B cell (primary cell): ENCODE measurements at regions of chr19 and their contacts with region 1.

Region 1: DNA sequence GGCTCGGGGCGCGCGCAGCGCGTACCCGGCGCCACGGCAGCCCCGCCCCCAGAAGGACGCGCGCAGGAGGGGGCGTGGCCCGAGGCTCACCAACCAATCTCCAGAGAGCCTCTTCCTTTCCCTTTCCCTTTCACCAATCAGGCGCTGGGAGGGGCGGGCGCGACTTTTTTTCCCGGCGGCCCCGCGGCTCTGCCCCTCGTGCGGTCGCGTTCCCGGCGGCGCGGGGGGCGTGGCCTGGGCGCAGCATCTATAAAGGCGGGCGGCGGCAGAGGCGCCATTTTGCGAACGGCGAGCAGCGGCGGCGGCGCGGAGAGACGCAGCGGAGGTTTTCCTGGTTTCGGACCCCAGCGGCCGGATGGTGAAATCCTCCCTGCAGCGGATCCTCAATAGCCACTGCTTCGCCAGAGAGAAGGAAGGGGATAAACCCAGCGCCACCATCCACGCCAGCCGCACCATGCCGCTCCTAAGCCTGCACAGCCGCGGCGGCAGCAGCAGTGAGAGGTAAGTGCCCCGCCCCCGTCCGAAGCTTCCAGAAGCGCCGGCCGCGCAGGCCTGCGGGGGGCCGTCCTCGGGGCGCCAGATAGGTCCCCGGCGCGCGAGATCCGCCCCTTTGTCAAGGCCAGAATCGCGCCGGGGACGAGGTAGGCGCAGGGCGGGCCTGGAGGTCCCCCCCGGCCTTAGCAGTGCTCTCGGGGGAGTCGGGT is 12.6 kb downstream of the PEAK3 start:
- DNase-seq: peak; percentile 99
- ATAC-seq: peak; percentile 66
- H3K4me3 ChIP-seq: peak overlapping the region; percentile 59 to 100 (median 99)
- H3K4me3 Mint-ChIP-seq: peak overlapping the region; percentile 89
- H3K27ac ChIP-seq: peak overlapping the region; percentile 79 to 94
- H3K27ac Mint-ChIP-seq: peak overlapping the region; percentile 97
- H3K4me1 ChIP-seq: peaks cover 56 to 66% of the 10 kb centered on the region in 2 donors
- H3K4me1 Mint-ChIP-seq: peaks cover 52% of the 10 kb centered on the region
- H3K27me3 ChIP-seq: no peaks in the 10 kb centered on the region
- H3K27me3 Mint-ChIP-seq: no peaks in the 10 kb centered on the region
- CTCF ChIP-seq: no peak

Region 2: DNA sequence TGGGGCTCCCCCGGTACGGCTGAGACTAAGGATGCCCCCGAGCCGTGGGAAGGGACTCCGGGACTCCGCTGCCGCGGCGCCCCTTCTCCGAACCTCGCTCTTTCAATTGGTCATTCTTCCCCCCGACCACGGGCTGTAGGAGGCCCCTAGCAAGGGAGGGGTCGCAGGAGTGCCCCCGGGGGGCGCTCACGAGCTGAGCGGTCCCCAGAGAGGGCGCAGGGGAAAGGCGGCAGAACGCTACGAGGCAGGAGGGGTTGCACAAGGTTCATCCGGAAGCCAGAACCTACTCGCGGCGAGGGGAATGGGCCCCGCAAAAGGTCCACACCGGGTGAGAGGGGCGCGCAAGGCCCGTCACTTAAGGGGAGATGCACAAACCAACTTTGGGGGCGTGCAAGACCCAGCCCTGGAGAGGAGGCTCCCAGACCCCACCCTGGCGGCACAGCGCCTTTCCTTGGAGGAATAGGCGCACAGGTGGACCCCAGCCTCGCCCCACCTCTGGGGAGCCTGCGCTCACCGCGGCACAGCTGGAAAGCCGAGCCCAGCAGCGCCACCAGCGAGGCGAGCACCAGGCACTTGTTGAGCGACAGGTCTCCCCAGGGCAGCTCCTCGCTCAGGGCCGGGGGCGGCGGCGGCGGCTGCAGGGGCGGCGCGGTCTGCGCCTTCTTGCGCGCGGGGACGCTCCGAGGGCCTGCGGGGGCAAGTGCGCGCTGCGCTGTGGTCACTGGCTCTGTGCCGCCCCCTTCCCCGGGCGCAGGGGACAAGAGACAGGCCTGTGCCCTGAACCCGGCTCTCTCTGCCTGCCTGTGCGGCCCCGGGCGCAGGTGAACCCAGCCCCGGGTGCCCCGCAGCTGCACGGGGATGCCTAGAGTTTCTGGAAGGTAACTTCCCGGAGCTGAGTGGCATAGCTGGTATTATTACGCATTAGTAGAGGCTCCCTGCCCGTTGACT is 16.0 kb before region 1 on chr19:
- CTCF ChIA-PET with region 1: interaction called, 66 read pairs
- POLR2A ChIA-PET with region 1: interaction called, 134 read pairs
- intact Hi-C with region 1: loop called (anchors 1 kb)
- DNase-seq: peak; percentile 77
- ATAC-seq: peak; percentile 40
- H3K4me3 ChIP-seq: peak overlapping the region; percentile 30 to 70 (median 55)
- H3K4me3 Mint-ChIP-seq: peak overlapping the region; percentile 88
- H3K27ac ChIP-seq: no peak overlapping the region
- H3K27ac Mint-ChIP-seq: peak overlapping the region; percentile 65
- H3K4me1 ChIP-seq: peaks cover 54 to 68% of the 10 kb centered on the region in 2 donors
- H3K4me1 Mint-ChIP-seq: peaks cover 43% of the 10 kb centered on the region
- H3K27me3 ChIP-seq: peaks cover 0 to 38% (median 14%) of the 10 kb centered on the region in 4 experiments
- H3K27me3 Mint-ChIP-seq: no peaks in the 10 kb centered on the region
- CTCF ChIP-seq: peak; percentile 63

Region 3: DNA sequence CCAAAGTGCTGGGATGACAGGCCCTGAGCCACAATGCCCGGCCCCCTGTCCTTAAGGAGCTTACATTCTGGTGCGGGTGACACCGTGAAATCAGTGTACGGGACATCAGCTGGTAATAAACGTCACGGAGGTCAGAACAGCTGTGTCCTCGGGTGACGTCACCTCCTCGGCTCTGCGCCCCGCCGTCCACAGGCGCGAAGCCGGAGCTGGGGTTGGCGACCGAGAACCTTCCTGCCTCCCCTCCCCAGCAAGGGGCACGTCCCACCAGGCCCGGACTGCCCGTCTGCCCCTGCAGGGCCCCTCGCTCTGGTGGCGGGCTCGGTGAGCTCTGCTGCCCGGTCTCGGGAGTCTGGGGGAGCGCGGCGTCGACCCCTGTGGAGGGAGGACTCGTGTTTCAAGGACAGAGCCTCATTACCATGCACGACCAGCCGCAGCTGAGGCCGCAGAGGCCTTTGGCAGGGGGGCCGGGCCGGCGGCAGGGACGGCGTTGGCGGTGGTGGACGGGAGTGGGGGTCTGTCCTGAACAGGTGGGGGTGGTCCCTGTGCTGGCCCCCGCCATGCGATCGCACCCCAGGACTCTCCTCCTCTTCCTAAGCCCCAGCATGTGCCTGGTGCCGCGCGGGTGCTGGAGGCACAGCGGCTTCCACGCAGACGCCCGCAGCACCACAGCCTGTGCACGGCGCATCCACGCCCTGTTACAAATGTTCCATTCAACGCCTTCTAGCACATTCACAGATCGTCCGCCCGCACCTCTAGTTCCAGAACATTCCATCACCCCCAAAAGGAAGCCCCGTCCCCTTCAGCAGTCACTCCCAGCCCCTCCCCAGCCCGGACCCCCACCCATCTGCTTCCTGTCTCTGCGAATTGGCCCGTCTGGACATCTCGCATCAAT is 33.2 kb after region 1 on chr19:
- CTCF ChIA-PET with region 1: interaction called, 6 read pairs
- POLR2A ChIA-PET with region 1: interaction called, 15 read pairs
- intact Hi-C with region 1: no loop called
- DNase-seq: peak; percentile 78
- ATAC-seq: peak; percentile 48
- H3K4me3 ChIP-seq: peak overlapping the region in 4 of 5 experiments; percentile 25 to 65 (median 43)
- H3K4me3 Mint-ChIP-seq: peak overlapping the region; percentile 87
- H3K27ac ChIP-seq: peak overlapping the region; percentile 64 to 78
- H3K27ac Mint-ChIP-seq: peak overlapping the region; percentile 86
- H3K4me1 ChIP-seq: peaks cover 45 to 66% of the 10 kb centered on the region in 2 donors
- H3K4me1 Mint-ChIP-seq: peaks cover 43% of the 10 kb centered on the region
- H3K27me3 ChIP-seq: peaks cover 0 to 18% (median 5%) of the 10 kb centered on the region in 4 experiments
- H3K27me3 Mint-ChIP-seq: peaks cover 4% of the 10 kb centered on the region
- CTCF ChIP-seq: no peak

Region 4: DNA sequence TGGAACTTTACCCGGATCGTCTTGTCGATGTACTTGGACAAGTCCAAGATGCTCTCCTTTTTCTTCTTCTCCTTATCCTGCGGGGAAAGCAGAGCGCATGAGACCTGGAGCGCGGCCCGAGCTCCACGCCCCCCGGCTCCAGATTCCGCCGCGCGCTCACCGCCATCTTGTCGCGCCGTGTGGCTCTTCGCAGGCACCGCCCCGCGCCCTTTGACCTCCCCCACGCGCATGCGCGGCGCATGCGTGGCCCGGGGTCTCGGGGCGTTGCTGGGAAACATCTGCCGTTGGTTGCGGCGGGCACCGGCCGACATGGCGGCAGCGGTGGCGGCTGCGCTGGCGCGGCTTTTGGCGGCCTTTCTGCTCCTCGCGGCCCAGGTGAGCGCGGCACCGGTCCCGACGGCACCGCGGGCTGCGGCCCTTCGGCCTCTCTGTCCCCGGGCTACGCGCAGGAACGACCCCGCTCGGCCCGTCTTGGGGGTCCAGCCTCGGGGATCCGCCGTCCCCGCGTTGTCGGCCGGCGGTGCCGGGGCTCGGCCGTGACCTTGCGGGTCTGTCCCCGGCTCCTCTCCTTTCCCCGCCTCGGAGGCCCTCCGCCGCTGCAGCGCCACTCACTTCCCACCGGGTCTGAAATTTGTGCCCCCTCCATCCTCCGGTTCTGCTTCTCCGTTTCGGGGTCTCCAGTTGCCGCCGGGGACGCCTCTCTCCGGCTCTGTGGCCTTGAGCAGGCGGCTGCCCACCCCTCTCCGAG is 59.2 kb after region 1 on chr19 and contains the starts of genes LSM7 and SPPL2B:
- CTCF ChIA-PET with region 1: interaction called, 3 read pairs
- POLR2A ChIA-PET with region 1: interaction called, 5 read pairs
- intact Hi-C with region 1: loop called (anchors 2 kb)
- DNase-seq: peak; percentile 95
- ATAC-seq: peak; percentile 42
- H3K4me3 ChIP-seq: peak within 1 kb of the TSS; percentile 66 to 97 (median 92)
- H3K4me3 Mint-ChIP-seq: peak within 1 kb of the TSS; percentile 96
- H3K27ac ChIP-seq: peak within 1 kb of the TSS; percentile 71 to 90
- H3K27ac Mint-ChIP-seq: peak within 1 kb of the TSS; percentile 98
- H3K4me1 ChIP-seq: peaks cover 81 to 92% of the 10 kb centered on the region in 2 donors
- H3K4me1 Mint-ChIP-seq: peaks cover 81% of the 10 kb centered on the region
- H3K27me3 ChIP-seq: no peaks in the 10 kb centered on the region
- H3K27me3 Mint-ChIP-seq: no peaks in the 10 kb centered on the region
- CTCF ChIP-seq: no peak
- total RNA-seq, gene LSM7: 180 and 201 TPM in 2 replicates
- total RNA-seq, gene SPPL2B: 479 and 511 TPM in 2 replicates

Region 5: GRCh38 chr19:2355168-2356035 is 86.0 kb after region 1 on chr19:
- CTCF ChIA-PET with region 1: no interaction called
- POLR2A ChIA-PET with region 1: no interaction called
- intact Hi-C with region 1: no loop called
- DNase-seq: no peak
- ATAC-seq: no peak
- H3K4me3 ChIP-seq: no peak overlapping the region
- H3K4me3 Mint-ChIP-seq: no peak overlapping the region
- H3K27ac ChIP-seq: no peak overlapping the region
- H3K27ac Mint-ChIP-seq: no peak overlapping the region
- H3K4me1 ChIP-seq: peaks cover 3 to 4% of the 10 kb centered on the region in 2 donors
- H3K4me1 Mint-ChIP-seq: peaks cover 1% of the 10 kb centered on the region
- H3K27me3 ChIP-seq: peaks cover 0 to 3% (median 1%) of the 10 kb centered on the region in 4 experiments
- H3K27me3 Mint-ChIP-seq: peaks cover 1% of the 10 kb centered on the region
- CTCF ChIP-seq: no peak

Region 6: DNA sequence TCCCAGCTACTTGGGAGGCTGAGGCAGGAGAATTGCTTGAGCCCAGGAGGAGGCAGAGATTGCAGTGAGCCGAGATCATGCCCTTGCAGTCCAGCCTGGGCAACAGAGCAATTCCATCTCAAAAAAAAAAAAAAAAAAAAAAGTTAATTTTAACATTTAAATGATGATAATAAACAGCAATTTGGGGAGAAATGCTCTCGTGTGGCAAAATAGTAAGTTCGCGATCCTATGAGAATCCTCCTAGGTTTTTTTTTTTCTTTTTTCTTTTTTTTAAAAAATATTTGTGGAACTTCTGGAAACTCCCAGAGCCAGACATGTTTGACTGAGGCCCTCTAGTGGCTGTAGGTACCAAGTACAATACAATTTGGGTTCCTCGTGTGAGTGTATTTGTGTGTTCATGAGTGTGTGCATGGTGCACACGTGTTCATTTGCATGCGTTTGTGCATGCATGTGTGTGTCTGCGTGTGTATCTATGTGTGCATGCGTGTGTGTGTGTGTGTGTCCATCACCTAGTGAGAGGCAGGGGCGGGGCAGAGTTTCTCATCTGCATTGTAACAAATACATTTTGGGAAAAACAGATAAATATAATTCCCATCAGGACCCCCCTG is 121.8 kb after region 1 on chr19:
- CTCF ChIA-PET with region 1: interaction called, 58 read pairs
- POLR2A ChIA-PET with region 1: interaction called, 3 read pairs
- intact Hi-C with region 1: no loop called
- DNase-seq: peak; percentile 82
- ATAC-seq: peak; percentile 51
- H3K4me3 ChIP-seq: no peak overlapping the region
- H3K4me3 Mint-ChIP-seq: peak overlapping the region; percentile 61
- H3K27ac ChIP-seq: no peak overlapping the region
- H3K27ac Mint-ChIP-seq: peak overlapping the region; percentile 70
- H3K4me1 ChIP-seq: peaks cover 16 to 31% of the 10 kb centered on the region in 2 donors
- H3K4me1 Mint-ChIP-seq: peaks cover 32% of the 10 kb centered on the region
- H3K27me3 ChIP-seq: no peaks in the 10 kb centered on the region
- H3K27me3 Mint-ChIP-seq: no peaks in the 10 kb centered on the region
- CTCF ChIP-seq: peak; percentile 92